Activated naive CD4-positive, alpha-beta T cell treated with anti-CD3 and anti-CD28 coated beads for 36 hours (primary cell): ENCODE measurements at regions of chrX and their contacts with region 1.

Region 1: GRCh38 chrX:119118780-119119395 is 8.7 kb downstream of the KIAA1210 start:
- DNase-seq: peak; percentile 71
- H3K4me3 Mint-ChIP-seq: no peak overlapping the region
- H3K27ac Mint-ChIP-seq: no peak overlapping the region
- H3K4me1 Mint-ChIP-seq: no peaks in the 10 kb centered on the region
- H3K27me3 Mint-ChIP-seq: peaks cover 4% of the 10 kb centered on the region

Region 2: GRCh38 chrX:119189595-119189994 is 70.7 kb after region 1 on chrX:
- CTCF ChIA-PET with region 1: interaction called, 3 read pairs
- intact Hi-C with region 1: loop called (anchors 5 kb)
- DNase-seq: no peak
- H3K4me3 Mint-ChIP-seq: no peak overlapping the region
- H3K27ac Mint-ChIP-seq: no peak overlapping the region
- H3K4me1 Mint-ChIP-seq: no peaks in the 10 kb centered on the region
- H3K27me3 Mint-ChIP-seq: no peaks in the 10 kb centered on the region

Region 3: DNA sequence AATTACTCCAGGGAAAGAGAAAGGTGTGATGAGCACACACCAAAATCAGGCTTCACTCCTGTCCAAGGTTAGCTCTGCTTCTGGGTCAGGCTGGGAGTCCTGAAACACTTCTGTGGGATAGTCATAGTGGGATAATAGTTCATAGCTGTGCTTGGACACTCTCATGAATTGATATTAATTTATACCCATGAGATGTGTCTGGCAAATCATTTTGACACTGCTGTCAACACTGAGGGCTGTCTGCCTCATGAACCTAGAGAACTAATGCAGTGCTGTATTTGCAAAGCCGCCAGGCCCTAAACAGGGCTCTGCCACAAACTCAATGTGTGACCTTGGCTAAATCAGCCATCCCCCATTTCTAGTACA is 92.7 kb after region 1 on chrX:
- CTCF ChIA-PET with region 1: interaction called, 4 read pairs
- intact Hi-C with region 1: loop called (anchors 5 kb)
- DNase-seq: no peak
- H3K4me3 Mint-ChIP-seq: no peak overlapping the region
- H3K27ac Mint-ChIP-seq: no peak overlapping the region
- H3K4me1 Mint-ChIP-seq: no peaks in the 10 kb centered on the region
- H3K27me3 Mint-ChIP-seq: no peaks in the 10 kb centered on the region

Region 4: DNA sequence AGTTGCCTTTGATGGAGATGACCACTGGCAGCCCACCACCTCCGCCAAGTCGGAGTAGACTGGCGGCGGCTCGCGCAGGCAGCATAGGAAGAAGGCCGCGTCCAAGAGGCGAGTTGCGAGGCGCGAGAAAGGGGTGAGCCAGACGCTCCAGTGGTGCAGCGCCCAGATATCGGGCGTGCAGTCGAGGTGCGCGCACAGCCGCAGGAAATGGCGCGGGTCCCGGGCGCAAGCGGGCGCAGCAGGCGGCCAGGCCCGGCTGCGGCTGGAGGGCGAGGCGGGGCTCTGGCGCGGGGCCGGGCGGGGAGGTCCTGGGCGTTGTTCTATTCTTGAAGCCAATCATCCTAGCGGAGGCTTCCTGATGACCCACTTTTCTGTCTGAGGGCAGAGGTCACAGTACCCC is 104.0 kb after region 1 on chrX:
- CTCF ChIA-PET with region 1: interaction called, 11 read pairs
- intact Hi-C with region 1: loop called (anchors 5 kb)
- DNase-seq: no peak
- H3K4me3 Mint-ChIP-seq: no peak overlapping the region
- H3K27ac Mint-ChIP-seq: no peak overlapping the region
- H3K4me1 Mint-ChIP-seq: no peaks in the 10 kb centered on the region
- H3K27me3 Mint-ChIP-seq: peaks cover 7% of the 10 kb centered on the region

Region 5: GRCh38 chrX:119266364-119266995 is 147.6 kb after region 1 on chrX:
- CTCF ChIA-PET with region 1: interaction called, 8 read pairs
- intact Hi-C with region 1: loop called (anchors 1 kb)
- DNase-seq: peak; percentile 25
- H3K4me3 Mint-ChIP-seq: no peak overlapping the region
- H3K27ac Mint-ChIP-seq: no peak overlapping the region
- H3K4me1 Mint-ChIP-seq: no peaks in the 10 kb centered on the region
- H3K27me3 Mint-ChIP-seq: peaks cover 2% of the 10 kb centered on the region